Common myeloid progenitor, CD34-positive (primary cell): ENCODE measurements at regions of chrX and their contacts with region 1.

Region 1: GRCh38 chrX:72245461-72246089 is 6.7 kb upstream of the ERCC6L start:
- DNase-seq: peak; percentile 17 to 39 (median 29)
- H3K4me3 ChIP-seq: no peak overlapping the region
- H3K27ac ChIP-seq: no peak overlapping the region
- H3K4me1 ChIP-seq: peaks cover 0 to 5% (median 0%) of the 10 kb centered on the region in 4 experiments
- H3K27me3 ChIP-seq: peaks cover 0 to 4% (median 0%) of the 10 kb centered on the region in 5 experiments

Region 2: GRCh38 chrX:72330131-72330530 is 84.6 kb after region 1 on chrX:
- CTCF ChIA-PET with region 1: no interaction called
- POLR2A ChIA-PET with region 1: no interaction called
- DNase-seq: no peak
- H3K4me3 ChIP-seq: no peak overlapping the region
- H3K27ac ChIP-seq: no peak overlapping the region
- H3K4me1 ChIP-seq: no peaks in the 10 kb centered on the region
- H3K27me3 ChIP-seq: peaks cover 0 to 17% (median 0%) of the 10 kb centered on the region in 5 experiments

Region 3: DNA sequence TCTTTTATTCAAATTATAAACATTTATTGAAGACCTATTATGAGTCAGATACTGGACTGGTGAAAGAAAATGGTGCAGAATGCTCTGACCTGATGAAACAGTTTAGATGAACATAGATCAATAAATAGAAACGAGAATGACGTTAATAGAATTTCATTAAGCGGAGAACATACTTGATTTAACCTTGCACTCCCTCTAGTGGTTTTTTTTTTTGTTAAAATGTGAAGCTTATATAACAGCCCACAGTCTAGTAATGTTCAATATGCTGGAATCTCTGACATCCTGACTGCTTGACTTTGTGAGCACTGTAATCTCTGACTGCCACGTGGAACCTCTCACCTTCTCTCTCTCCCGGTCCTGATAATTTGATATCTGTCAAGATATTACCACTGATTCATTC is 294.7 kb after region 1 on chrX:
- CTCF ChIA-PET with region 1: interaction called, 24 read pairs
- POLR2A ChIA-PET with region 1: no interaction called
- DNase-seq: peak; percentile 25 to 41 (median 35)
- H3K4me3 ChIP-seq: no peak overlapping the region
- H3K27ac ChIP-seq: no peak overlapping the region
- H3K4me1 ChIP-seq: no peaks in the 10 kb centered on the region
- H3K27me3 ChIP-seq: no peaks in the 10 kb centered on the region